ENCODE measurements at regions of chr12 and their contacts with region 1.

Region 1: GRCh38 chr12:6047249-6048237 is 76.9 kb downstream of the VWF start:
- DNase-seq: peak; percentile 34
- H3K4me3 ChIP-seq: no peak overlapping the region
- H3K27ac ChIP-seq: no peak overlapping the region
- H3K4me1 ChIP-seq: peaks cover 14% of the 10 kb centered on the region
- H3K27me3 ChIP-seq: no peaks in the 10 kb centered on the region
- CTCF ChIP-seq: no peak

Region 2: GRCh38 chr12:6124411-6125309 is 77.1 kb after region 1 on chr12 and contains the start of gene VWF:
- CTCF ChIA-PET with region 1: no interaction called
- dilution Hi-C with region 1: loop called (anchors 5 kb)
- in situ Hi-C with region 1: no loop called
- intact Hi-C with region 1: no loop called
- DNase-seq: no peak
- H3K4me3 ChIP-seq: no peak within 1 kb of the TSS
- H3K27ac ChIP-seq: no peak within 1 kb of the TSS
- H3K4me1 ChIP-seq: peaks cover 5% of the 10 kb centered on the region
- H3K27me3 ChIP-seq: peaks cover 3% of the 10 kb centered on the region
- CTCF ChIP-seq: no peak
- total RNA-seq, gene VWF: under 0.01 to 0.49 TPM